Common myeloid progenitor, CD34-positive (primary cell): ENCODE measurements at regions of chr11 and their contacts with region 1.

Region 1: GRCh38 chr11:128172046-128172878 is 415.1 kb downstream of the ETS1 start:
- DNase-seq: peak; percentile 83 to 92 (median 88)
- H3K4me3 ChIP-seq: no peak overlapping the region
- H3K27ac ChIP-seq: no peak overlapping the region
- H3K4me1 ChIP-seq: no peaks in the 10 kb centered on the region
- H3K27me3 ChIP-seq: no peaks in the 10 kb centered on the region

Region 2: GRCh38 chr11:128146926-128147605 is 25.2 kb before region 1 on chr11:
- CTCF ChIA-PET with region 1: interaction called, 13 read pairs
- POLR2A ChIA-PET with region 1: no interaction called
- DNase-seq: peak in 2 of 3 donors; percentile 48 to 54
- H3K4me3 ChIP-seq: no peak overlapping the region
- H3K27ac ChIP-seq: no peak overlapping the region
- H3K4me1 ChIP-seq: peaks cover 0 to 5% (median 2%) of the 10 kb centered on the region in 4 experiments
- H3K27me3 ChIP-seq: no peaks in the 10 kb centered on the region

Region 3: GRCh38 chr11:128182844-128183243 is 10.6 kb after region 1 on chr11:
- CTCF ChIA-PET with region 1: interaction called, 10 read pairs
- POLR2A ChIA-PET with region 1: no interaction called
- DNase-seq: no peak
- H3K4me3 ChIP-seq: no peak overlapping the region
- H3K27ac ChIP-seq: no peak overlapping the region
- H3K4me1 ChIP-seq: no peaks in the 10 kb centered on the region
- H3K27me3 ChIP-seq: no peaks in the 10 kb centered on the region

Region 4: DNA sequence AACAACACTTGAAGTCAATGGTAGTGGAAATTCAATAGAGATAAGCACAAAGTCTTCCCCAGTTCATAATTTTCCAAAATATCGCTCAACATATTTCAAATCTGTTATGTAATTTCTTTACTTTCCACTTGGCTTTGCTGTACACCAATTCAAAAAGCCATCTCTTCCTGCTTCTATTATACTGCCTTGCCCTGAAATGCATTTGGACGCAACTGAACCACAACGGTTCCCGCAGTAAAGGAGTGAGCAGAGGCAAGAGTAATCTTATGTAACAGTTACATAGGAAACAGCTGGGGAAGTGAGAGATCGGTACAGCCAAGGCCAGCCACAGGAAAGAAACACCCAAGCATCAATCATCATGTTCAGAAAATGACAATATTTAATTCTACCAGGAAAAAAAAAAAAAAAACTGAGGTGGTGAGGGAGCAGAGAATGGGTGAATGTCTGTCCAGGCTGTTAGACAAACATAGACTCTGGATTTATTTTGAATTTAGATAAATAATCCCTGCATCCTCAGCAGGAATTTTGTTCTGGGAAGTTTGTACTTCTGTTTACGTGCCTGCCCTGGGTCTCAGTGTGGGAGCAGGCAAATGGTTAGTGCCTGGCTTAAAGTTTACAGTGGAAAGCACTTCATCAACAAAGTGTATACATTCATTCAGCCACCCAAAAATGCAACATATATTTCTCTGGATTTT is 22.9 kb after region 1 on chr11:
- CTCF ChIA-PET with region 1: interaction called, 16 read pairs
- POLR2A ChIA-PET with region 1: no interaction called
- DNase-seq: peak; percentile 95 to 99 (median 99)
- H3K4me3 ChIP-seq: peak overlapping the region in 3 of 7 experiments; percentile 9 to 32 (median 31)
- H3K27ac ChIP-seq: peak overlapping the region; percentile 43 to 68
- H3K4me1 ChIP-seq: peaks cover 28 to 54% (median 37%) of the 10 kb centered on the region in 4 experiments
- H3K27me3 ChIP-seq: no peaks in the 10 kb centered on the region

Region 5: GRCh38 chr11:128757235-128757711 is 585.0 kb after region 1 on chr11:
- CTCF ChIA-PET with region 1: interaction called, 10 read pairs
- POLR2A ChIA-PET with region 1: no interaction called
- DNase-seq: peak; percentile 92 to 98 (median 97)
- H3K4me3 ChIP-seq: no peak overlapping the region
- H3K27ac ChIP-seq: peak overlapping the region in 1 of 2 experiments; percentile 29
- H3K4me1 ChIP-seq: peaks cover 3 to 37% (median 14%) of the 10 kb centered on the region in 4 experiments
- H3K27me3 ChIP-seq: no peaks in the 10 kb centered on the region

Region 6: DNA sequence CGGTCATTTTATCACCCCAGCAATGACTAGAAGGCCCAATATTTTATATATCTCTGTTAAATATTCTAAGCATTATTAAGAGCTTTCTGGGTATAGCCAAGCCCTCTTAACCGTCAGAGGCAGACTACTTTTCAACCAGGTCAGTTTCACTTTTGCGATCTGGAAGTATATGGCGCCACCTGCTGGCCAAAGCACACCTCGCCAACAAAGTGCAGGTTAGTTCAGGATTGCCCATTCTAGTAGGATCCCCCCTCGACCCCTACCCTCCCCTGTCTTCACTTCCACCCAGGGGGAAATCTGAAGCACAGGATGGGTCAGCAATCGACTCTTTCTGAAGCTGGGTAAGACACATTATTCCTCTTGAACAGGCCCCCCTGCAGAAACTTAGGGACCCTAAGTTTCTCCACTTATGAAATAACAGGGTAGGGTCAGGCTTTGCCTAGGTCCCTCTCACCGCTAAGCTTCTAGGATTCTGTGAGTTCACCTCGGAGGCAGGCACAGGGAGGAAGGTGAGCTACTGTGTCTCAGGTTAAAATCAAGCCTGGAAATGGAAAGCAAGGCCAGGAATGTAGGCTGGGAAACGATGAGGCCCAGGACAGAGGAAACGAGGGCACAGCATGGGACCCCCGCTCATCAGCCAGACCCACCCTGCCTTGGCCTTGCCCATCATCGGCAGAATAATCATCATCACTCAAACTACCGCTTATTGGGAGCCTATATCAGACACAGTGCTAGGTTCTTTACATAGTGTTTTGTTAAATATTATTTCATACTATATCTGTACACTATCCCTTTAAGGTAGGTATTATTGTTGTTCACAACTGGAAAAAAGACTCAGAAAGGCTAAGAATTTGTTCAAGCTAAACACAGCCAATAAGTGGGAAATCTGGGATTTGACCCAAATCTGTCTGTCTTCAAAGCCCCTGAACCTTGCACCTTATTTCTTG is 659.2 kb after region 1 on chr11:
- CTCF ChIA-PET with region 1: interaction called, 29 read pairs
- POLR2A ChIA-PET with region 1: no interaction called
- DNase-seq: peak; percentile 82 to 92 (median 90)
- H3K4me3 ChIP-seq: peak overlapping the region in 5 of 7 experiments; percentile 4 to 68 (median 33)
- H3K27ac ChIP-seq: peak overlapping the region in 1 of 2 experiments; percentile 14
- H3K4me1 ChIP-seq: peaks cover 11 to 33% (median 12%) of the 10 kb centered on the region in 4 experiments
- H3K27me3 ChIP-seq: no peaks in the 10 kb centered on the region